ENCODE measurements at regions of chr3 and their contacts with region 1.

Region 1: DNA sequence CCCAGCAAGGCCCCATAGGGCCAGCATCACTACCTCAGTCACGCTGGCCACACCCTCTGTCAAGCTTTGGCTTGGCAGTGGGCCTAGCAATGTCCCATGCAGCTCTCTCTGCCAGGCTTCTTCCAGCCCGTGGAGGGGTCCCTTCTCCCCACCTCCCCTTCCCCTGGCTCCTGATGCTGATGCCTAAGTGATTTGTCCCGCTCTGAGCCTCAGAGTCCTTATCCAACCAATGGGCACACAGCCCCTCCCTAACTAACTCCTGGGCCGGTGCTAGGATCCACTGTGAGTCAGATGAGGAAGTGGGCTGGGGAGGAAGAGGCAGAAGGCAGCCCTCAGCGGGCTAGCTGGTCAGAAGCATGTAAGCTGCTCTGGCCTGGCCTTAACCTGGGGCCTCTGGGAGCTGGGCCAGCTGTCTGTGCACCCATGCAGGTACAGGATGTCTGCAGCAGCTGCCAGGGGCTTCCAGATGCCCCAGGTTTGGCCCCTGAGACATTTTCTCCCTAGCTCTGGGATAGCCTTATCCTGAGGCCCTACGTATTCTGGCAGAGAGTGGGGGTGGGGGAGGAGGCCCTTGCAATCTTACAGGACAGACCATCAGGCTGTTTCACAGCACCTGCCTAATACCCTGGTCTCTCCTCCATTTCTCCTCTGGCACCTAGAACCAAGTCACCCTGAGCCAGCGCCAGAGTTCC is 740 bp upstream of the ZBTB47 start:
- DNase-seq: peak; percentile 63 to 67
- H3K4me3 ChIP-seq: peak overlapping the region; percentile 87 to 88
- H3K27ac ChIP-seq: peak overlapping the region; percentile 98 to 99
- H3K4me1 ChIP-seq: peaks cover 3 to 21% of the 10 kb centered on the region in 2 donors
- H3K27me3 ChIP-seq: no peaks in the 10 kb centered on the region
- CTCF ChIP-seq: peak in 1 of 4 experiments; percentile 11
- POLR2A ChIP-seq: peak; percentile 54 to 65

Region 2: GRCh38 chr3:42600111-42600988 is 52.4 kb before region 1 on chr3 and contains the start of gene NKTR:
- intact Hi-C with region 1: loop called (anchors 10 kb)
- DNase-seq: peak; percentile 97
- H3K4me3 ChIP-seq: peak within 1 kb of the TSS; percentile 78 to 80
- H3K27ac ChIP-seq: peak within 1 kb of the TSS; percentile 94 to 95
- H3K4me1 ChIP-seq: no peaks in the 10 kb centered on the region
- H3K27me3 ChIP-seq: no peaks in the 10 kb centered on the region
- CTCF ChIP-seq: peak in 1 of 4 experiments; percentile 16
- POLR2A ChIP-seq: peak; percentile 84 to 91
- total RNA-seq, gene NKTR: 119 to 361 (median 164) TPM